PC-3 (cell line): ENCODE measurements at regions of chr14 and their contacts with region 1.

Region 1: GRCh38 chr14:36373982-36374673 is 53.7 kb upstream of the MBIP start:
- DNase-seq: peak; percentile 93
- ATAC-seq: peak; percentile 99
- H3K4me3 ChIP-seq: no peak overlapping the region
- H3K27ac ChIP-seq: no peak overlapping the region
- H3K4me1 ChIP-seq: no peaks in the 10 kb centered on the region
- H3K27me3 ChIP-seq: 0 out of 2 replicates have a peak, but pooled peaks cover 5% of the 10 kb centered on the region
- CTCF ChIP-seq: peak; percentile 93

Region 2: GRCh38 chr14:35883677-35884293 is 490.3 kb before region 1 on chr14:
- CTCF ChIA-PET with region 1: no interaction called
- POLR2A ChIA-PET with region 1: no interaction called
- intact Hi-C with region 1: loop called (anchors 1 kb)
- DNase-seq: peak; percentile 60
- ATAC-seq: peak; percentile 75
- H3K4me3 ChIP-seq: peak overlapping the region; percentile 41; the same call in 1 of the 2 replicates
- H3K27ac ChIP-seq: no peak overlapping the region
- H3K4me1 ChIP-seq: peaks cover 12% of the 10 kb centered on the region
- H3K27me3 ChIP-seq: no peaks in the 10 kb centered on the region
- CTCF ChIP-seq: peak; percentile 92

Region 3: GRCh38 chr14:36207500-36207899 is 166.6 kb before region 1 on chr14:
- CTCF ChIA-PET with region 1: no interaction called
- POLR2A ChIA-PET with region 1: no interaction called
- intact Hi-C with region 1: loop called (anchors 1 kb)
- DNase-seq: peak; percentile 51
- ATAC-seq: peak; percentile 85
- H3K4me3 ChIP-seq: no peak overlapping the region
- H3K27ac ChIP-seq: no peak overlapping the region
- H3K4me1 ChIP-seq: no peaks in the 10 kb centered on the region
- H3K27me3 ChIP-seq: peaks cover 44% of the 10 kb centered on the region
- CTCF ChIP-seq: peak; percentile 75

Region 4: GRCh38 chr14:36238666-36239363 is 135.3 kb before region 1 on chr14:
- CTCF ChIA-PET with region 1: interaction called, 5 read pairs
- POLR2A ChIA-PET with region 1: no interaction called
- intact Hi-C with region 1: loop called (anchors 1 kb)
- DNase-seq: peak; percentile 73
- ATAC-seq: peak; percentile 95
- H3K4me3 ChIP-seq: no peak overlapping the region
- H3K27ac ChIP-seq: no peak overlapping the region
- H3K4me1 ChIP-seq: peaks cover 18% of the 10 kb centered on the region
- H3K27me3 ChIP-seq: peaks cover 16% of the 10 kb centered on the region; the same call in 1 of the 2 replicates
- CTCF ChIP-seq: no peak